H1 (cell line): ENCODE measurements at regions of chr17 and their contacts with region 1.

Region 1: GRCh38 chr17:78865682-78866390 is 25.2 kb upstream of the USP36 start:
- DNase-seq: peak; percentile 60 to 95
- H3K4me3 ChIP-seq: no peak overlapping the region
- H3K27ac ChIP-seq: no peak overlapping the region
- H3K4me1 ChIP-seq: no peaks in the 10 kb centered on the region; a peak in 1 of 7 replicates
- H3K27me3 ChIP-seq: no peaks in the 10 kb centered on the region
- CTCF ChIP-seq: peak; percentile 82 to 97 (median 94)
- EP300 ChIP-seq: no peak
- POLR2A ChIP-seq: no peak
- RAD21 ChIP-seq: peak; percentile 79 to 82

Region 2: DNA sequence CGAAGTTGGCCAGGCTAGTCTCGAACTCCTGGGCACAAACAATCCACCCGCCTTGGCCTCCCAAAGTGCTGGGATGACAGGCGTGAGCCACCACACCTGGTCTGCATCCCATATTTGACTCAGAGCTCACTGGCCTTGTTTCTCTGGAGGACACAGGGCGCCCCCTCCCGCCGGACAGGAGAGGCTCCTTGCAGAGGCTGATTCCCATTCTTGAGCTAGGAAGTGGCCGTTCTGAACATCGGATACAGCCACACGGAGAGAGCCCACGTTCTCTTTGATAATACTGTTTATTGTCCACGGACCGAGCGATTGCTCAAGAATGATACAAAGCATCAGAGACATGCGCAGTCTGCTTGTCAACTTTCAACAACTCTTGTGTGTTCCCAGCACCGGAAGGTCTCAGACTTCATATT is 13.1 kb before region 1 on chr17:
- CTCF ChIA-PET with region 1: interaction called, 31 read pairs
- POLR2A ChIA-PET with region 1: no interaction called
- DNase-seq: peak in 1 of 2 experiments; percentile 59
- H3K4me3 ChIP-seq: no peak overlapping the region
- H3K27ac ChIP-seq: no peak overlapping the region
- H3K4me1 ChIP-seq: no peaks in the 10 kb centered on the region; a peak in 1 of 7 replicates
- H3K27me3 ChIP-seq: no peaks in the 10 kb centered on the region
- CTCF ChIP-seq: peak; percentile 42 to 45 (median 44)
- EP300 ChIP-seq: no peak
- POLR2A ChIP-seq: no peak
- RAD21 ChIP-seq: peak in 1 of 2 experiments; percentile 40; a peak in 1 of 4 replicates

Region 3: GRCh38 chr17:78884148-78884825 is 18.5 kb after region 1 on chr17:
- CTCF ChIA-PET with region 1: interaction called, 12 read pairs
- POLR2A ChIA-PET with region 1: interaction called, 3 read pairs
- DNase-seq: peak in 1 of 2 experiments; percentile 62
- H3K4me3 ChIP-seq: peak overlapping the region in 2 of 4 experiments; percentile 3 to 41; a peak in 4 of 8 replicates
- H3K27ac ChIP-seq: peak overlapping the region; percentile 15; the same call in 1 of the 2 replicates
- H3K4me1 ChIP-seq: peaks cover 0 to 29% (median 20%) of the 10 kb centered on the region in 4 experiments; a peak in 6 of 7 replicates
- H3K27me3 ChIP-seq: no peaks in the 10 kb centered on the region; a peak in 1 of 7 replicates
- CTCF ChIP-seq: no peak
- EP300 ChIP-seq: no peak
- POLR2A ChIP-seq: no peak; a peak in 1 of 3 replicates
- RAD21 ChIP-seq: no peak

Region 4: GRCh38 chr17:78896091-78896833 is 30.4 kb after region 1 on chr17:
- CTCF ChIA-PET with region 1: interaction called, 10 read pairs
- POLR2A ChIA-PET with region 1: interaction called, 4 read pairs
- DNase-seq: no peak
- H3K4me3 ChIP-seq: no peak overlapping the region
- H3K27ac ChIP-seq: no peak overlapping the region
- H3K4me1 ChIP-seq: peaks cover 4 to 24% (median 14%) of the 10 kb centered on the region in 4 experiments
- H3K27me3 ChIP-seq: no peaks in the 10 kb centered on the region
- CTCF ChIP-seq: no peak
- EP300 ChIP-seq: no peak
- POLR2A ChIP-seq: no peak
- RAD21 ChIP-seq: no peak

Region 5: GRCh38 chr17:78915872-78916632 is 50.2 kb after region 1 on chr17:
- CTCF ChIA-PET with region 1: interaction called, 14 read pairs
- POLR2A ChIA-PET with region 1: no interaction called
- DNase-seq: no peak
- H3K4me3 ChIP-seq: no peak overlapping the region
- H3K27ac ChIP-seq: no peak overlapping the region
- H3K4me1 ChIP-seq: peaks cover 0 to 11% (median 4%) of the 10 kb centered on the region in 4 experiments; a peak in 6 of 7 replicates
- H3K27me3 ChIP-seq: no peaks in the 10 kb centered on the region
- CTCF ChIP-seq: no peak
- EP300 ChIP-seq: no peak
- POLR2A ChIP-seq: no peak
- RAD21 ChIP-seq: no peak